ENCODE measurements at regions of chr19 and their contacts with region 1.

Region 1: GRCh38 chr19:10106100-10106936 is at the start of gene PPAN:
- DNase-seq: peak; percentile 99
- H3K4me3 Mint-ChIP-seq: peak within 1 kb of the TSS; percentile 88
- H3K27ac Mint-ChIP-seq: peak within 1 kb of the TSS; percentile 99
- H3K4me1 Mint-ChIP-seq: peaks cover 67% of the 10 kb centered on the region
- H3K27me3 Mint-ChIP-seq: no peaks in the 10 kb centered on the region
- total RNA-seq, gene PPAN: 99.2 to 107 TPM

Region 2: DNA sequence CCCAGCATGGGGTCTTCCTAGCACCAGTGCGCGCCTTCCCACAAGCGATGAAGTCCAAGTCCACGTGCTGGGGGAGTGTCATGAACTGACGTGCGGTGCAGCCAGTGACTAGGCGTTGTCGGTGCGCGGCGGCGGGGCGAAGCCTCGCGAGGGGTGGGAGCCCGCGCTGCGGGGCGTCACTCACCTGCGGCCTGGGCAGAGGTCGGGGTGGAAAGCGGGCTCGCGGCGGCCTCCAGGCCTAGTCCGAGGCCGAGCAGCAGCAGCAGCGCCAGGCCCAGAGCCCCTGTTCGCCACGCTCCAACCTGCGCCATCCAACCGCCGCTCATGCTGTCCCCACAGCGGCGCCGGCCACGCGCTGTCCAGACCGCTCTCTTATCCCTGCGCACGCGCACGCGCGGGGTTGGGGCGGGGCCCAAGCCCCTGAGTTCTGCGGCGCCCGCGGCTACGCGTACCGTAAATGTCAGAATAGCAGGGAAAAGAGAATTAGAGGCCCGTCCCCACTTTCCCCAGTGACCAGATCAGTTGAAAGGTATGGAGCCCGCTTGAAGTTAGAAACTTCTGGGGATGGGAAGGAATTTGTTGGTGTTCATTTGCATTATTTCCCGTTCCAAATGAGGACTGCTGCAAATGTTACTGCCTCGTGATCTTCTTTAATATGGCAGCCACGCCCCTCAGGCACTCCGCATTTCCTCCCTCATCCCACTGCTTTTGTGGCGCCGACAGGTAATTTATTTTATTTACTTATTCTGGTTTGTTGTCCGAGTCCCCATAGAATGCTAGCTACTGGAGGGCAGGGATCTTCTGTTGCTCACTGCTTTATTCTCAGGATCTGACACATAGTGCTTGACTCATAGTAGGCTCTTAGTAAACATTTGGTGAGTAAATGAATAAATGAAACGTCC is 1798.1 kb before region 1 on chr19 and contains the start of gene CD320:
- CTCF ChIA-PET with region 1: no interaction called
- POLR2A ChIA-PET with region 1: no interaction called
- intact Hi-C with region 1: loop called (anchors 5 kb)
- DNase-seq: peak; percentile 90
- H3K4me3 Mint-ChIP-seq: peak within 1 kb of the TSS; percentile 96
- H3K27ac Mint-ChIP-seq: peak within 1 kb of the TSS; percentile 92
- H3K4me1 Mint-ChIP-seq: peaks cover 31% of the 10 kb centered on the region
- H3K27me3 Mint-ChIP-seq: no peaks in the 10 kb centered on the region
- total RNA-seq, gene CD320: 44.9 to 45.4 TPM

Region 3: DNA sequence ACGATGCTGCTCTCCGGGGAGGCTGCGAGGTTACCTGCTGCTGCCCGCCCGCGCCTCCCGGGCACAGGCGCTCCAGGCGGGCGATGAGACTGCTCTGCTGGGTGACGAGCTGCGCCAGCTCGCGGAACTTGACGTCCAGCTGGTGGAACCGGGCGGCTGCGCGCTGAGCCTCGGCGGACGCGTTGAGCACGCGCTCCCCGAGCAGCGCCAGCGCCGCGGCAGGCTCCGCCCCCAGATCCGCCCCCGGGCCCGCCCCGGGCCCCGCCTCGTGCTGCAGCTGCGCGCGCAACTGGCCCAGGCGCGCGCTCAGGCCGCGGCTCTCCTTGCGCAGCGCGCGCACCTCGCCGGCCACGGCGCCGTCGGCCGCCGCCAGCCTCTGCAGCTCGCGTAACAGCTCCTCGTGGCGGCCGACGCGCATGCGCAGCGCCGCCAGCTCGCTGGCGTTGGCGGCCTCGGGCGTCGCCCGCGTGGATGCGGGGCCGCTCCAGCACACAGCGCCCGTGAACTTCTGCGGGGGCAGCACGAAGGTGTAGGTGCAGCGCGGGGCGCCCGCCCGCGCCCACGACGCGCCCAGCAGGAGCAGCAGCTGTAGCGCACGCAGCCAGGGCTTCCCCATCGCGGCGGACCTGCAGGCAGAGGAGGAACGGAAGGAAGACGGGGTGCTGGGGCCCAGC is 10.2 kb before region 1 on chr19:
- CTCF ChIA-PET with region 1: interaction called, 96 read pairs
- POLR2A ChIA-PET with region 1: interaction called, 75 read pairs
- intact Hi-C with region 1: loop called (anchors 1 kb)
- DNase-seq: peak; percentile 92
- H3K4me3 Mint-ChIP-seq: peak overlapping the region; percentile 62
- H3K27ac Mint-ChIP-seq: peak overlapping the region; percentile 23
- H3K4me1 Mint-ChIP-seq: peaks cover 34% of the 10 kb centered on the region
- H3K27me3 Mint-ChIP-seq: no peaks in the 10 kb centered on the region

Region 4: DNA sequence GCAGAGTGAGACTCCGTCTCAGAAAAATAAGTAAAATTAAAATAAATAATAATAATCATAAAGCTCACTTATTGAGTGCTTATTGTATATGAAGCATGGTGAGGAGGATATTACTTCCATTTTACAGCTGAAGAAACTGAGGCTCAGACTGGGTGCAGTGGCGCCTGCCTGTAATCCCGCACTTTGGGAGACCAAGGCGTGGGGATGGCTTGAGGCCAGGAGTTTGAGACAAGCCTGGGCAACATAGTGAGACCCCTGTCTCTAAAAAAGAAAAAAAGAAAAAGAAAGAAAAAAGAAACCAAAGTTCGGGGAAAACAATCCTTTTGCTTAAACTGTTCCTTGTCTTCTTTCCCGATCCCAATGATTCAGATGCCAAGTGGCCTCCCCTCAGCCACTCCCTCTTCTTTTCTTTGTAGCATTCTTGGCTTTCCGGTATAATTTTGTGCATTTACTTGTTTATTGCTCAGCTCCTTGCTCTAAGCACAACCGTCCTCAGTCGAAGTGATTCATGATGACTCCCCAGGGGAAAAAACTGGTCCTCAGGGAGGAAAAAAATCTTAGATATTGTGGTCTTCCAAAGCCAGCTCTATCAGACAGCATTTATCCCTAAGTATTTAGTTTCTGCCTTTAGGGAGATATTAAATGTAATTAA is 14.3 kb after region 1 on chr19:
- CTCF ChIA-PET with region 1: interaction called, 9 read pairs
- POLR2A ChIA-PET with region 1: interaction called, 76 read pairs
- intact Hi-C with region 1: loop called (anchors 2 kb)
- DNase-seq: no peak
- H3K4me3 Mint-ChIP-seq: no peak overlapping the region
- H3K27ac Mint-ChIP-seq: no peak overlapping the region
- H3K4me1 Mint-ChIP-seq: peaks cover 26% of the 10 kb centered on the region
- H3K27me3 Mint-ChIP-seq: no peaks in the 10 kb centered on the region

Region 5: DNA sequence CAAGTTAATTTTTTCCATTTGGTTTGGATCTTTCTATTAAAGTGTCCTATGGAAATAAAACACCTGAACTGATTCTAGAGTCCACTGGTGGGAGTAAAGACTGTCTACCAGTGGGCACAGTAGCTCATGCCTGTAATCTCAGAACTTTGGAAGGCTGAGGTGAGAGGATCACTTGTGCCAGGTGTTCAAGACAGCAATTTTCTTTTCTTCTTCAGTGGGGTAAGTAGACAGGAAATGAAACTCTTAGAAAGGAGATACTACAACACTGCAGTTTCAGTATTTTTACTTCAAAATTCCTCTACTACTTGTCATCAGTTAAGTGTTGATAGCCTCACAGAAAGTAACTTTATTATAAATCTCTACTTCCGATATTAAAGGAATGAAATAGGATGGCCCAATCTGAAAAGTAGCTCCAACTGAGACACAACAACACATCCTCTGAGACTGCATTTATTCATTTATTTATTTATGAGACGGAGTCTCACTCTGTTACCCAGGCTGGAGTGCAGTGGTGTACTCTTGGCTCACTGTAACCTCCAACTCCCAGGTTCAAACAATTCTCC is 62.1 kb after region 1 on chr19:
- CTCF ChIA-PET with region 1: no interaction called
- POLR2A ChIA-PET with region 1: no interaction called
- intact Hi-C with region 1: no loop called
- DNase-seq: no peak
- H3K4me3 Mint-ChIP-seq: no peak overlapping the region
- H3K27ac Mint-ChIP-seq: peak overlapping the region; percentile 56
- H3K4me1 Mint-ChIP-seq: peaks cover 11% of the 10 kb centered on the region
- H3K27me3 Mint-ChIP-seq: no peaks in the 10 kb centered on the region

Region 6: GRCh38 chr19:10194500-10195289 is 88.4 kb after region 1 on chr19 and contains the start of gene DNMT1:
- CTCF ChIA-PET with region 1: no interaction called
- POLR2A ChIA-PET with region 1: interaction called, 4 read pairs
- intact Hi-C with region 1: loop called (anchors 1 kb)
- DNase-seq: peak; percentile 99
- H3K4me3 Mint-ChIP-seq: peak within 1 kb of the TSS; percentile 98
- H3K27ac Mint-ChIP-seq: peak within 1 kb of the TSS; percentile 98
- H3K4me1 Mint-ChIP-seq: peaks cover 52% of the 10 kb centered on the region
- H3K27me3 Mint-ChIP-seq: no peaks in the 10 kb centered on the region
- total RNA-seq, gene DNMT1: 356 to 357 TPM

Region 7: DNA sequence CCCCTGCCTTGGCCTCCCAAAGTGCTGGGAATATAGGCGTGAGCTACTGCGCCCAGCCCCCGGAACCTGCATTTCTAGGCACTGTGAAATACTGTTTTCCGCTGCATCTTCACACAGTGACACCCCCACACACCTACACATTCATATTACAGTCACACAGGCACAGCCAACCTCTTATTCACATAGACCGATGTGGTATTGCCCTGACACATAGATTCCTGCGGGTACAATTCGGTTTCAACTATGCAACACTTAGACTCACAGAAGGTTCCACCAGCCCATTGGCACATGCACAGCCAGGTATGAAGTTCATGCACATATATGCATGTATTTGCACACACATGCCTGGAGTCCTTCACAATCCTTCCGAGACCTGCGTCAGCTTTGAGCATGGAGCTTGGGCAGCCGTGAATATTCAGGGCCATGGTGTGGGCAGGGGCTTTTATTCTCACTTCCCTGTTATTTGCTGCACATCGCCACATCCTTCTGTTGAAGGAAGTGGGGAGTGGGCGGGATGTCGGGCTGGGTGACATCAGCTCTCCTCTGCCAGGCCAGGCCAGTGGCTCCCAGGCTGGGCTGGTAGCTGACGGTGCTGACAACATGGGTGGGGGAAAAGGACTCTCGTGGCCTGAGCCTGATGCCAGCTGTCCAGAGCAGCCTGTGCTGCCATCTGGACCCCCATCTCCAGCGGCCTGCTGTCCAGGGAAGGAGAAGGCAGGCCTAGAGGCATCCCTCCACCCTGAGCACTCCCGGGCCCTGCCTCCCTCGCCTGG is 302.4 kb after region 1 on chr19:
- CTCF ChIA-PET with region 1: no interaction called
- POLR2A ChIA-PET with region 1: no interaction called
- intact Hi-C with region 1: loop called (anchors 2 kb)
- DNase-seq: peak; percentile 86
- H3K4me3 Mint-ChIP-seq: peak overlapping the region; percentile 30
- H3K27ac Mint-ChIP-seq: peak overlapping the region; percentile 87
- H3K4me1 Mint-ChIP-seq: peaks cover 73% of the 10 kb centered on the region
- H3K27me3 Mint-ChIP-seq: no peaks in the 10 kb centered on the region

Region 8: DNA sequence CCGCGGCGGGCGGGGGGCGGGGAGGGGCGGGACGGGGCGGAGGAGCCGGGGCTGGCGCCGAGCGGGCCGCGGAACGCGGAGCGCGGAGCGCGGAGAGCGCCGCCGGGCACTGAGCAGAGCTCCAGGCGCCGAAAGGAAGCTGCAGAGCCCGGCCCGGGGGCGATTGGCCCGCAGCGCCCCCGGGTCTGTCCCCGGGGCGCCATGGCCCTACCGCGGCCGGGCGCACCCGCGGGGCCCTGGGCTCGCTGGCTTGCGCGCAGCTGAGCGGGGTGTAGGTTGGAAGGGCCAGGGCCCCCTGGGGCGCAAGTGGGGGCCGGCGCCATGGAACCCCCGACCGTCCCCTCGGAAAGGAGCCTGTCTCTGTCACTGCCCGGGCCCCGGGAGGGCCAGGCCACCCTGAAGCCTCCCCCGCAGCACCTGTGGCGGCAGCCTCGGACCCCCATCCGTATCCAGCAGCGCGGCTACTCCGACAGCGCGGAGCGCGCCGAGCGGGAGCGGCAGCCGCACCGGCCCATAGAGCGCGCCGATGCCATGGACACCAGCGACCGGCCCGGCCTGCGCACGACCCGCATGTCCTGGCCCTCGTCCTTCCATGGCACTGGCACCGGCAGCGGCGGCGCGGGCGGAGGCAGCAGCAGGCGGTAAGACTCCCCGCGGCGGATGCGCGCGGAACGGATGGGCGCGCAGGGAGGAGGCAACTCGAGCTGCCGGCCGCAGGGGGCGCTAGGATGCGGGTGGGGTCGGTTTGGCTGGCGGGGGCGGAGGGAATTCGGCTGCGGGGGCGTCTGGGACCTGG is 314.3 kb after region 1 on chr19 and contains the start of gene PDE4A:
- CTCF ChIA-PET with region 1: no interaction called
- POLR2A ChIA-PET with region 1: no interaction called
- intact Hi-C with region 1: no loop called
- DNase-seq: peak; percentile 80
- H3K4me3 Mint-ChIP-seq: peak within 1 kb of the TSS; percentile 71
- H3K27ac Mint-ChIP-seq: peak within 1 kb of the TSS; percentile 47
- H3K4me1 Mint-ChIP-seq: peaks cover 66% of the 10 kb centered on the region
- H3K27me3 Mint-ChIP-seq: peaks cover 49% of the 10 kb centered on the region
- total RNA-seq, gene PDE4A: 15.7 to 17.5 TPM

Measured in activated CD4-positive, alpha-beta memory T cell treated with anti-CD3 and anti-CD28 coated beads for 36 hours (primary cell).